ENCODE measurements at regions of chr2 and their contacts with region 1.

Region 1: DNA sequence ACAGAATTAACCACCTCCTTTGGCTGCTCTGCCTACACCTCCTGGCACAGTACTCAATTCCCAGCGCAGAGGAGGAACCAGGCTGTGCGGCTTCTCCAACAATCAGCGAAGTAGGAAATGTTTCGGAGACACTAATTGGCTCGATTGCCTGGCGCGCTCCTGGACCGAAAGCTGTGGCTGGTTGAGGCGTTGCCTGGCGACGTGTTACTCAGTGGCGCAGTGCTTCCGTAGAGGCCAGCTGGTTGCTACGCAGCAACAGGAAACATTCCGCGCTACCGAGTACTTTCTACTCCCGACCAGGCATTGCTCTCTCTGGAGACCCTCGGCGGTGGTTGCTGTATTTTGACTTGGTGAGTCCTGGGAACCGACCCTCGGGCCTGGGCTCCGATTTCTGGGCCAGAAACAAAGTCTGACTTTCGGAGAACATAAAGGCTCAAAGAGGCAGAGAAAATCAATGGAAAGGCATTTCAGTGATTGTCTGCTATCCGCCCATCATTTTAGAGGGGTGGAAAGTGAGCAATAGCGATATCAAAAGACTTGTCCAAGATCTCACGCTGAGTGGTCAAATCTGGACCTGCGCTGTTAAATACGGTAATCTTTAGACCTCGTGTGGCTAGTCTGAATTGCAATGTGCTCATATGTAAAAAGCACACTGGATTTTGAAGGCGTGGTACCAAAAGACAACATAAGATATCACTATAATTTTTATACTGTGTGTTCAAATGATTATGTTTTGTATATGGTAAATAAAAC is at the start of gene DNAH6:
- DNase-seq: peak; percentile 67 to 94 (median 89)
- ATAC-seq: peak; percentile 99
- H3K4me3 ChIP-seq: peak within 1 kb of the TSS; percentile 78
- H3K4me3 Mint-ChIP-seq: peak within 1 kb of the TSS; percentile 79 to 93 (median 90)
- H3K27ac ChIP-seq: peak within 1 kb of the TSS; percentile 75
- H3K27ac Mint-ChIP-seq: peak within 1 kb of the TSS; percentile 66 to 98 (median 93)
- H3K4me1 ChIP-seq: peaks cover 5 to 6% of the 10 kb centered on the region in 2 donors
- H3K4me1 Mint-ChIP-seq: peaks cover 6 to 27% (median 23%) of the 10 kb centered on the region in 7 donors
- H3K27me3 ChIP-seq: no peaks in the 10 kb centered on the region
- H3K27me3 Mint-ChIP-seq: peaks cover 0 to 41% (median 0%) of the 10 kb centered on the region in 5 donors
- total RNA-seq, gene DNAH6: 0.73 to 2.3 (median 1.1) TPM

Region 2: DNA sequence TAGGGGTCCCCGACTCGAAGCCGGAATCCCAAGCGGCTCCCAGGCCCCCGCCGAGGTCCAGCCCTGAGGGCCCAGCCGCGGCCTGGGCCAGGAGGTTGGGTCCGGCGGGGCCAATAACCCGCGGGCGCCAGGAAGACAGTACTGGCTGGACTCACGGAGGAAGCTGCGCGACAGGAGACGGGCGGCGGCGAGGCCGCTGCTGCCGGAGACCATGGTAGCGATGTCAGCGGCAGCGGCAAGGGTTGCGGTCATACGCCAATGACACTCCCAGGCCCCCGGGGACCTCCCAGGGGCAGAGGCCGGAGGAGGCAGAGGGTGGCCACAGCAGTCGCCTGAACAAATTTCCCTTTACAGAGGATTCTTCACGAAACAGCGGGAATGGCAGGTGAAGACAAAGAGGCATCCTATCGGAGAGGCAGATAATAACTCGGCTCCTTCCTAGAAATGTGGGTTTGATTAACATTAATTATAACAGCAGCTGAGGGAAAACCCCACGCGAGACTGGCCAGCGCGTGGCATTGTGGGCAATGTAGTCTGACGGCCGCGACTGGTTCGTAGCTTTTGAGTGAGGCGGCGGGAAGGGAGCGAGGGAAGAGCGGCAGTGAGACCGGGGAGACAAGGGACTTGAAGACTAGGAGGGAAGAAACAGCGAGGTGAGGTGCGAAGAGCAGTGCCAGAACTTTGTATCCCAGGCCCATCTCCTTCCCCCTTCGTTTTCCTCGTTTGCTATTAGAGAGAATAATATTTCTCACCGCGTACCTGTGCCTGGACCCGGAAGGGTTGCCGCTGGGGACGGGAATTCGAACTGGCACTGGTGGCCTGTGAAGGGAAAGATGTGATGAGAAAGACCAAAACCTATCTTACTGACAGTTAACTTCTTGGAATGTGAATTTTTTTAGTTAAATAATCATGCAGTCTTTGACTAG is 57.1 kb before region 1 on chr2 and contains the start of gene SUCLG1:
- CTCF ChIA-PET with region 1: no interaction called
- POLR2A ChIA-PET with region 1: no interaction called
- intact Hi-C with region 1: loop called (anchors 1 kb)
- DNase-seq: peak; percentile 72 to 88 (median 84)
- ATAC-seq: peak; percentile 98
- H3K4me3 ChIP-seq: peak within 1 kb of the TSS; percentile 69
- H3K4me3 Mint-ChIP-seq: peak within 1 kb of the TSS; percentile 90 to 100 (median 96)
- H3K27ac ChIP-seq: peak within 1 kb of the TSS; percentile 94
- H3K27ac Mint-ChIP-seq: peak within 1 kb of the TSS; percentile 91 to 99 (median 99)
- H3K4me1 ChIP-seq: peaks cover 9 to 24% of the 10 kb centered on the region in 2 donors
- H3K4me1 Mint-ChIP-seq: peaks cover 33 to 56% (median 50%) of the 10 kb centered on the region in 7 donors
- H3K27me3 ChIP-seq: no peaks in the 10 kb centered on the region
- H3K27me3 Mint-ChIP-seq: no peaks in the 10 kb centered on the region
- total RNA-seq, gene SUCLG1: 45.1 to 63.6 (median 47.9) TPM

Region 3: GRCh38 chr2:84603911-84604310 is 87.5 kb after region 1 on chr2:
- CTCF ChIA-PET with region 1: no interaction called
- POLR2A ChIA-PET with region 1: no interaction called
- intact Hi-C with region 1: no loop called
- DNase-seq: no peak
- ATAC-seq: no peak
- H3K4me3 ChIP-seq: no peak overlapping the region
- H3K4me3 Mint-ChIP-seq: no peak overlapping the region
- H3K27ac ChIP-seq: no peak overlapping the region
- H3K27ac Mint-ChIP-seq: no peak overlapping the region
- H3K4me1 ChIP-seq: no peaks in the 10 kb centered on the region
- H3K4me1 Mint-ChIP-seq: peaks cover 0 to 9% (median 0%) of the 10 kb centered on the region in 7 donors
- H3K27me3 ChIP-seq: no peaks in the 10 kb centered on the region
- H3K27me3 Mint-ChIP-seq: peaks cover 0 to 7% (median 0%) of the 10 kb centered on the region in 5 donors

Measured in naive thymus-derived CD4-positive, alpha-beta T cell (primary cell).